Activated CD4-positive, alpha-beta T cell treated with anti-CD3 and anti-CD28 coated beads, Interleukin-2, amount 10 ng/mL, durations not matched to agents 24 days and 14 days (primary cell): ENCODE measurements at regions of chr12 and their contacts with region 1.

Region 1: DNA sequence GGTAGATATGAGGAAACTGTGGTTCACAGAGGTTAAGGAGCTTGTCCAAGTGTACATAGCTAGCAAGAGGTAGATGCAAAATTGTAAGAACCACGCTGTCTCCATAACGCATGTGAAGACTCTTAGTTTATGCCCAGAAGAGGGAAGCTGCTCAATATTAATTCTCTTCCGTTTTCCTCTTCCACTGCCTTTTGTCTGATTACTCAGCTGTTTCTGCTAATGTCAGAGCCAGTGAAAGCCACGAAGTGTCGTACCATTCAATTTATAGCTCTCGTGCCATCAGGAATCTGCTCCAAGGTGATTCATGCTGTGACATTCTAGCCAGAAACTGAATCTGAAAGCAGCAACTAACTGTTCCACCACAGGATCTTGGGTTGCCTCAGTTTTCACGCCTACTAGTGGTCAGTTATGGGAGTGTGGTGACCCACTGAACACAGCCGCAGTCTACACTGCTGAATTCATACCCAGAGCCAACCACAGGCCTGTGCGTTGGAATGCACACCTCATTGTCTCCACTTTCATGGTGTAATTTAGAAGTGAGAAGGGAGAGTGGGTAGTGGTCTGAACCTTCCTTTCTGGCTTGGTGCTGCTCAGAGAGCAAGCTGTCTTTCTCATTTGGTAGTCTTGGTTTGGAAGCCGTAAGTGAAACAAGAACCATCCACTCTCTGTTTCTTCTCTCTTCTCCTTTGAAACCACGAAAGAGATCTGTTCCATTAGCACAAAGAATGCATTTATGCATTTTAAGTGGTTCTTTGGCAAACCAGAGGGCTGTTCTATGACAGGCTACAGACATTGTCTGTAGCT is 74.2 kb upstream of the NAP1L1 start:
- DNase-seq: peak; percentile 91
- H3K4me3 Mint-ChIP-seq: peak overlapping the region; percentile 6
- H3K27ac Mint-ChIP-seq: peak overlapping the region; percentile 84
- H3K4me1 Mint-ChIP-seq: peaks cover 16% of the 10 kb centered on the region
- H3K27me3 Mint-ChIP-seq: peaks cover 30% of the 10 kb centered on the region

Region 2: GRCh38 chr12:75511116-75512048 is 647.3 kb before region 1 on chr12 and contains the start of gene KRR1:
- intact Hi-C with region 1: loop called (anchors 10 kb)
- DNase-seq: peak; percentile 97
- H3K4me3 Mint-ChIP-seq: peak within 1 kb of the TSS; percentile 98
- H3K27ac Mint-ChIP-seq: peak within 1 kb of the TSS; percentile 100
- H3K4me1 Mint-ChIP-seq: peaks cover 31% of the 10 kb centered on the region
- H3K27me3 Mint-ChIP-seq: peaks cover 3% of the 10 kb centered on the region
- total RNA-seq, gene KRR1: 134 and 141 TPM in 2 replicates

Region 3: DNA sequence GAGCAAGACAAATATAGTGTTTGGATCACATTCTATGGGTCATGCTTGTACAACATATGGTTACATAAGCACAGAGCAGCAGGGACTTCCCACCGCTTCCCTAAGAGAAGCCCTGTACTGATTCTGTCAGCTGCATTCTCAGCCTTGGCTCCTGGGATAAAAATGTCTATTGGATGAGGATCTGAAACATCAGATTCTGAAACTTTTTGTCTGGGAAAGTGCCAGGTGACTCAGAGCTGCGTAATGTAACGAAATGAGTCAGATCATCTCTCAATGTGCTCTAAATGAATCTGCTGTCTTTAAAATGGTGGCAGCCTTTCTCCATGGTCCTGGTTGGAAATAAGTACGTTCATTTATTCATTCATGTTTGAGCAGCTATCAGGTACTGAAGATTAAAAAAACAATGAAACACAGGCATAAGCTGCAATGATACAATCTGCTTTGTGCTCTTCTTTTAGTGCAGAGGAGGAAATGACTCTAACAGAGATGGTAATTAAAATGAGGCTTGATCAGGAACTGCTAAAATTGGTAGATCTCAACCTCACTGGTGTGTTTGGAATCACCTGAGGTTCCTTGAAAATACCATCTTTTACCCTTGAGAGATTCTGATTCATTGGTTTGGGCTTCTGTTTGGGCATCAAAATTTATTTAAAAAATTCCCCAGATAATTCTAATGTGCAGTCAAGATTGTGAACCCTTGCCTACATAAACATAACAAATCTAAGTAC is 24.9 kb after region 1 on chr12:
- intact Hi-C with region 1: loop called (anchors 1 kb)
- DNase-seq: peak; percentile 62
- H3K4me3 Mint-ChIP-seq: no peak overlapping the region
- H3K27ac Mint-ChIP-seq: peak overlapping the region; percentile 61
- H3K4me1 Mint-ChIP-seq: peaks cover 7% of the 10 kb centered on the region
- H3K27me3 Mint-ChIP-seq: peaks cover 45% of the 10 kb centered on the region

Region 4: DNA sequence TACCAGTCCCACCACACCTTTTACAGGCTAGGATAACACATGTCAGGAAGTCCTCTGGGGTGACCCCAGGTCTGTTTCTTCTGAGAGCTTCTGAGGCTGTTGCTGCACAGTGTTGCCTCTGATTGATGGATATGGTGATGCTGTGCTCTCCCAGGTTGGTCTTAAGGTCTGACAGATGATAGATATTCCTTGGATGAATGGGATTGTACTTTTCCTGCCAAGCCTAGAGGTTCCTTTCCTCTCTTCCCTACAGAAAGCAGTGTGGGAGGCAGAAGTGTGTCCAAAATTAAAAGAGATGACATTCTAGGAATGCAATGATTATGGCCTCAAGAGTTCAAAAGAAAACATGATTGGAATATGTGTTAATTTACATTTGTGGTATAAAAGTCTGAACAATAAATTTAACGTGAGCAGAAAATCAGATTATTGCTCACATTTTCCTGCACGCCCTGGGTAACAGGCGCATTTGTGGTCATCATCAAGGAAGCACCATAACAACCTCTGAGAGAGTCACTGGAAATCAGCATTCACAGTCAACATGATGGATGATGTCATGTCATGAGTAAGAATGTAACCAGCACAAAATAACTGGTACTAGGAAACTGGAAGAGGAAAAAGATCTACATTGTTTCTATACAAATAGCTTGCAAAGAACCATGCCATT is 115.8 kb after region 1 on chr12:
- intact Hi-C with region 1: loop called (anchors 5 kb)
- DNase-seq: no peak
- H3K4me3 Mint-ChIP-seq: no peak overlapping the region
- H3K27ac Mint-ChIP-seq: peak overlapping the region; percentile 75
- H3K4me1 Mint-ChIP-seq: peaks cover 8% of the 10 kb centered on the region
- H3K27me3 Mint-ChIP-seq: peaks cover 4% of the 10 kb centered on the region

Region 5: GRCh38 chr12:76455582-76456345 is 297.0 kb after region 1 on chr12:
- intact Hi-C with region 1: loop called (anchors 2 kb)
- DNase-seq: peak; percentile 73
- H3K4me3 Mint-ChIP-seq: no peak overlapping the region
- H3K27ac Mint-ChIP-seq: no peak overlapping the region
- H3K4me1 Mint-ChIP-seq: peaks cover 14% of the 10 kb centered on the region
- H3K27me3 Mint-ChIP-seq: no peaks in the 10 kb centered on the region